MCF 10A (cell line): ENCODE measurements at regions of chr1 and their contacts with region 1.

Region 1: GRCh38 chr1:240691521-240692338 is 79.8 kb upstream of the GREM2 start:
- DNase-seq: peak; percentile 71
- H3K4me3 Mint-ChIP-seq: no peak overlapping the region
- H3K27ac Mint-ChIP-seq: no peak overlapping the region
- H3K4me1 Mint-ChIP-seq: no peaks in the 10 kb centered on the region
- H3K27me3 Mint-ChIP-seq: no peaks in the 10 kb centered on the region
- CTCF ChIP-seq: peak; percentile 98

Region 2: DNA sequence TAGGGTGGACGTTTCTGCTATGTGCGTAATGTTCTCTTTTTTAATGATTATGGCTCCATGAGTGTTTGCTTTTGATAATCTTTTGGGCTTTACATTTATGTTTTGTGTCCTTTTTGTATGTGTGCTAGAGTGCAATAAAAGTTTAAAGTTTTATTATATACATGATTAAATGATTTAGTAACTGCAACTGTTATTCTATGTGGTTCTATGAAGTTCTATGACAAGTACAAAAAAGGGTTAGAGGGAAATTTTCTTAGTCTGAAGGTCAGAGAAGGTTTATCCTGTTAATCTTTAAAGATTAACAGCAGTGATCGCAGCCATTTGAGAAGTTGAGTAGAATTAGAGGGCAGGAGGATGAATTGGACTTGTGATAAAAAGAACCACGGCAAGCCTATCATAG is 1691.8 kb before region 1 on chr1:
- CTCF ChIA-PET with region 1: no interaction called
- POLR2A ChIA-PET with region 1: no interaction called
- intact Hi-C with region 1: no loop called
- DNase-seq: no peak
- H3K4me3 Mint-ChIP-seq: no peak overlapping the region
- H3K27ac Mint-ChIP-seq: no peak overlapping the region
- H3K4me1 Mint-ChIP-seq: no peaks in the 10 kb centered on the region
- H3K27me3 Mint-ChIP-seq: no peaks in the 10 kb centered on the region
- CTCF ChIP-seq: no peak

Region 3: DNA sequence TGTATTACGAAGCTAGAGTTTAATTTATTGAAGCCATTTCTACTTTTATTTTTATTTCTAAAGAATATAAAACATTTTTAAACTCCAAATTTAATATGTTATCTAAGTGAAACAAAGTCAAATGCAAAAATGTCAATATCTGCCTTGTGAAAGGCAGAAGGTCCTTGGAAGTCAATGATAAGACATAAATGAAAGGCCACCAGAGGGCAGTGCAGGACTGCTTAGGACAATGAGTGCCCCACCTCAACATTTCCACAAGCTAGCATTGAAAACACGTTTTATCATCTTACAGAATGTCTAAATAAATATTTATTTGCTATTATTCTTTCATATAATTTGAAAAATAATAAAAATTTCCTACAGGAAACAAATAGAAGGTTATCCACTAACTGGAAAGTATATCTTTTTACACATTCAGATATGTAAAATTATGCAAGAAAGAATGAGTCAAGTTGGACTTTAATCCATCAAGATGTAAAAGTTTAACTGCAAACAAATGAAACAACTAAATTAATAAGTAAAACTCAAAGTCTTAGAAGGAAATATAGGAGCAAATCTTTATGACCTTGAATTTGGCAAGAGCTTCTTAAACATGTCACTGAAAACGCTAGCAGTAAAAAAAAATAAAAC is 740.1 kb before region 1 on chr1:
- CTCF ChIA-PET with region 1: interaction called, 11 read pairs
- POLR2A ChIA-PET with region 1: interaction called, 3 read pairs
- intact Hi-C with region 1: no loop called
- DNase-seq: peak; percentile 92
- H3K4me3 Mint-ChIP-seq: no peak overlapping the region
- H3K27ac Mint-ChIP-seq: no peak overlapping the region
- H3K4me1 Mint-ChIP-seq: no peaks in the 10 kb centered on the region
- H3K27me3 Mint-ChIP-seq: no peaks in the 10 kb centered on the region
- CTCF ChIP-seq: peak; percentile 95

Region 4: GRCh38 chr1:240027059-240027462 is 664.7 kb before region 1 on chr1:
- CTCF ChIA-PET with region 1: interaction called, 25 read pairs
- POLR2A ChIA-PET with region 1: no interaction called
- intact Hi-C with region 1: loop called (anchors 1 kb)
- DNase-seq: peak; percentile 81
- H3K4me3 Mint-ChIP-seq: no peak overlapping the region
- H3K27ac Mint-ChIP-seq: no peak overlapping the region
- H3K4me1 Mint-ChIP-seq: peaks cover 13% of the 10 kb centered on the region
- H3K27me3 Mint-ChIP-seq: no peaks in the 10 kb centered on the region
- CTCF ChIP-seq: peak; percentile 100

Region 5: GRCh38 chr1:240285541-240285940 is 406.2 kb before region 1 on chr1:
- CTCF ChIA-PET with region 1: no interaction called
- POLR2A ChIA-PET with region 1: no interaction called
- intact Hi-C with region 1: loop called (anchors 5 kb)
- DNase-seq: peak; percentile 96
- H3K4me3 Mint-ChIP-seq: peak overlapping the region; percentile 1
- H3K27ac Mint-ChIP-seq: peak overlapping the region; percentile 88
- H3K4me1 Mint-ChIP-seq: peaks cover 22% of the 10 kb centered on the region
- H3K27me3 Mint-ChIP-seq: no peaks in the 10 kb centered on the region
- CTCF ChIP-seq: no peak

Region 6: DNA sequence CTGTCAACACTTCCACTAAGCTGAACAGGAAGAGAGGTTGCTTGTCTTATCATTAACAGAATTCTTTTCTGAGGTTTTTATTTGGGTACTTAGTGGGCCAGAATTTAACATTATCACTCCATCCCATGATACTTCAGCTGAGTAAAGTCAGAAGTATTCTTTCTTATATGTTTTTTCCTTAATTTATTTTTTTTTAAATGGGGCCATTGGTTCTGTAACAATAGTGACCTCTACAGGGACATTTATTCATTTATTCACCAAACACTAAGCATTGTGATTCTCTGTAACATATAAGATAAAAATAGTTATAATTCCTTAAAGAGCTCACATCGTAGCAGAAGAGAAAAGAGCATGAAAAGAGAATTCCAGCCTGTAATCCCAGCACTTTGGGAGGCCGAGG is 89.5 kb before region 1 on chr1:
- CTCF ChIA-PET with region 1: interaction called, 16 read pairs
- POLR2A ChIA-PET with region 1: interaction called, 5 read pairs
- intact Hi-C with region 1: loop called (anchors 1 kb)
- DNase-seq: no peak
- H3K4me3 Mint-ChIP-seq: no peak overlapping the region
- H3K27ac Mint-ChIP-seq: no peak overlapping the region
- H3K4me1 Mint-ChIP-seq: no peaks in the 10 kb centered on the region
- H3K27me3 Mint-ChIP-seq: no peaks in the 10 kb centered on the region
- CTCF ChIP-seq: peak; percentile 49

Region 7: DNA sequence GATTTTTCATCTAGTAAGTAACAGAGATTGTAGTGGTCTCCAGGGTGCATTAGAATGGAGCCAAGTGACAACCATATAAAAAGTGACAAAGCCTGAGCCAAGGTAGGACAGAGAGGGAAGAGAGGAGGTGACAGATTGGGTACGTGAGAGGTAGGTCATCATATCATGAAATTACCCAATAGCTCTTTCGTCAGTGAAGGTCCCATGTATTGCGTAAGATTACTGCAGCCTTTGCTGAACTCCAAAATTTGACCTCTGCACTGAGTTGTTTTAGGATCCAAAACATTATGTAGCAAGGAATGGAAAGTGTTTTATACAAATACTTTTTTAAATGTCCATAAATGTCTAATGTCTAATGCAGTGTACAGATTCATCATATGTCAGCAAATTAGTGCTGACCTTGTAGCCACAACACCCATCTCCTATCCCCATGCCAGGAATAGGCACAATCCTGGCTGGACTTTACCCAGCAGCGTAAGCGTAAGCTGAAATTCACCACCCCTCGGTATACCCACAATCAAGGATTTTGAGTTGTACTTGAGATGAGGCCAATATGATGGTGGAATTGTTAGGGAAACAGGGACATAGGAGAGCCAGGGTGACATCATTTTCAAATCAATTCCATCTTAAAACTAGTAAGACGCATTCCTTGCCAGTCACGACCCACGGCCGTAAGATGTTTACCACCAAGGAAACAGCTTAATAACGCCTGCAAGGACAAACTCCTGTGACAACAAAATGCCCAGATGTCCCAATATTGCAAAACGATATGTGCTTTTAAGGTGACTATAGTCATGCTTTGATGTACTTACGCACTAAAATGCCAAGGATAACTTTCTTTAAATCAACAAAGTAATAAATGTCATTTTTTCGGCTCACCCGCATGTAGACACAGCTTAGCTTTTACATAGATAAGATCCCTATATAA is 41.7 kb before region 1 on chr1:
- CTCF ChIA-PET with region 1: interaction called, 11 read pairs
- POLR2A ChIA-PET with region 1: no interaction called
- intact Hi-C with region 1: no loop called
- DNase-seq: peak; percentile 40
- H3K4me3 Mint-ChIP-seq: no peak overlapping the region
- H3K27ac Mint-ChIP-seq: no peak overlapping the region
- H3K4me1 Mint-ChIP-seq: peaks cover 4% of the 10 kb centered on the region
- H3K27me3 Mint-ChIP-seq: no peaks in the 10 kb centered on the region
- CTCF ChIP-seq: no peak